KBM-7 (cell line): ENCODE measurements at regions of chr15 and their contacts with region 1.

Region 1: DNA sequence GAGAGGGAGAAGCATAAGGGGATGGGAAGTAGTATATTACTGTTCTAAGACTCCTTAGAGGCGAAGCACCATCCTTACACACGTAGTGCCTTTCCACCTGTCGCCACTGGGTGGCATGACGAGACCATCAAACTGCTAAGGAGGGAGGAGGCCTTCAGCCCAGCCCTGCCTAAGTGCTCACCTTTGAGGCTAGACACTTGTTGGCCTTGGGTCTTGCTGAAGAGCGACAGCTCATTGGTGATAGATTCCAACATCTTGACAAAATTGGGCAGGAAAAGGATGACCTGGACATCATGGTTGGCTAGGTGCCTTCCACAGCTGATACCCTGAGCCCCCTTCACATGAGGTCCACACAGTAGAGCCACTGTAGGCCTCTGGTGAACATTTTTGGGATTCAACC is 19.6 kb downstream of the CLK3 start:
- DNase-seq: peak; percentile 88

Region 2: GRCh38 chr15:74396445-74397238 is 238.6 kb before region 1 on chr15:
- in situ Hi-C with region 1: no loop called
- DNase-seq: peak; percentile 80

Region 3: DNA sequence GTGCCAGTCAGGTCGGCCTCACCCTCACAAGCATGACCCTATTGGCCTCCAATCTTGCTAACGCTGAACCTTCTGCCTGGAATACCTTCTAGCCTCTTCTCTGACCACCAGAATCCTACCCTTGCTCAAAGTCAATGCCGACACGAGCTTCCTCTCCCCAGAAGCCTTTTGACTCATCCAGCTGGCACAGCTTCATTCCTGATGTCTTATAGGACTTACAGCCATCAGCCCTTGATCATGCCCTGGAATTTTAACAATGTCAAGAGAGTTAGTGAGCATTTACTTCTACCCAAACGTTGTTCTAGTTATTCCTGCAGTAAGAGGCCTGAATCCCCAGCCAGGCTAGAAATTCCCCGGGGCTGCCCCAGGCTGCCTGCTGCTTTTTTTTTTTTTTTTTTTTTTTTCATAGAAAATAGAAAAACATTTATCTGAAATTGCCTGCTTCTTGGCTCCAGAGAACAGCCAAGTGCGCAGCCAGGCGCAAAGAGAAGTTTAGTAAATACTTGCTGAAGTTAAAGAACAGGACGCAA is 117.3 kb after region 1 on chr15:
- in situ Hi-C with region 1: loop called (anchors 10 kb)
- DNase-seq: no peak

Region 4: GRCh38 chr15:74956648-74957300 is 321.5 kb after region 1 on chr15 and contains the start of gene RPP25:
- in situ Hi-C with region 1: loop called (anchors 25 kb)
- DNase-seq: peak; percentile 89

Region 5: DNA sequence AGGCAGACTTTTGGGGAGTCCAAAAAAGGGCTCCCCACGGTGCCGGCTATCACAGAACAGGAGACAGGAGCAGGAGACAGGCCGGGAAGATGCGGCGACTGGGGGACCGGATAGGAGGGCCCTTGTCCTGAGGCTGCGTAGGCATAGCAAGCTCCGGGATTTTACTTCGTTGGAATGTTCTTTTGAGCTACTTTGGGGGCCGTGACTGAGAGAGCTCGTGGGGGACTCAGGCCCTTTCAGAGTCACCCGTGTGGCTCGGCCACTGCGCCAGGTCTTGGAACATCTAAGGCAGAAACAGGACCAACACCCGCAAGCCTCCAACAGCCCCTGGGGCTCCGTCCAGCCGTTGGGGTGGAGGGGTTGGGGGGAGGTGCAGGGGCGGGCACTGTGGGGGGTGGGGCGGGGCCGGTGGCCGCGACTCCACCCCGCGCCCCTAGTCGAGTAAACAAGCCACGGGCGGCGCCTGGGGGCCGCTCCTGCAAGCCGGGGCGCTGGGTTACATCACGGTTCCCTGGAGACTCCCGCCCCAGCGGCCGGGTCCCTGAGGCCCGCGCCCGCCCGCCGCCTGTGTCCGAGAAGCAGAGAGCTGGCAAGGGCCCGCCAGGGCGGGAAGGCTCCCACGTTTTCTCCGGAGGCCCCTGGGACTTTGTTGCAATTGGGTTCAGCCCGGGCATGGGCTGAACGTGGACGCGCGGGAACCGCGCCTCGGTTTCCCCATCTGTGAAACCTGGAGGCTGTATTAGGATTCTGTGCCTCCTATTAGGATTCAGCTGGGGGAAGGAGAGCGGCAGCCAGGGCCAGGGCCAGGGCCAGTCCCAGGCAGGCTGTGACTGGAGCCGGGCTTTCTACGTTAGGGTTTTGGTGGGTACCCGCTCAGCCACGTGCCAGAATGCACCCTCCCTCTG is 543.2 kb after region 1 on chr15:
- in situ Hi-C with region 1: no loop called
- DNase-seq: no peak